Left cardiac atrium (tissue), 4 donors: ENCODE measurements at regions of chr12 and their contacts with region 1.

Region 1: GRCh38 chr12:30515351-30515750 is 180.3 kb downstream of the IPO8 start:
- DNase-seq: no peak
- ATAC-seq: no peak

Region 2: GRCh38 chr12:29534935-29535334 is 980.4 kb before region 1 on chr12:
- intact Hi-C with region 1: loop called in 1 of 2 experiments (anchors 10 kb)
- DNase-seq: no peak
- ATAC-seq: peak in 1 of 2 donors; percentile 30

Region 3: DNA sequence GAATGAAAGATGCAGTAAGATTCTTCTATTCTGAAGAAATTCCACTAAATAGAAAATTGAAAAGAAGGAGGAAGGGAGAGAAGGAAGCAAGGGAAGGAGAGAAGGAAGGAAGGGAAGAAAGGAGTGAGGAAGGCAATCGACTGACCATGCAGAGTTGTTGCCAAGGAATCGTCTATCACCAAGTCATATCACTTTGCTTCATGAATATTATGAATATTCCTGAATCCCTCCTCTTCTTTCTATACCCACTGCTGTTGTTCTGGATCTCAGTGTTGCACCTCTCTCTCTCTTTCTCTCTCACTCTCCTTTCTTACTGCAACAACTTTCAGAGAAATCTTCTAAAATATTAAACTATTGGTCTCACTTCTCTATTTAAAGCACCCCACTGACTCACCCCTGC is 42.1 kb before region 1 on chr12:
- intact Hi-C with region 1: no loop called
- DNase-seq: no peak
- ATAC-seq: no peak